CD14-positive monocyte (primary cell): ENCODE measurements at regions of chr6 and their contacts with region 1.

Region 1: GRCh38 chr6:5657684-5658430 is 348.9 kb downstream of the NRN1 start:
- DNase-seq: peak; percentile 81 to 93 (median 89)
- H3K4me3 ChIP-seq: peak overlapping the region in 1 of 3 experiments; percentile 21
- H3K4me3 Mint-ChIP-seq: peak overlapping the region; percentile 61 to 67
- H3K27ac ChIP-seq: peak overlapping the region; percentile 78 to 97
- H3K27ac Mint-ChIP-seq: peak overlapping the region; percentile 97 to 100 (median 99)
- H3K4me1 ChIP-seq: peaks cover 18 to 23% of the 10 kb centered on the region in 2 donors
- H3K4me1 Mint-ChIP-seq: peaks cover 20% of the 10 kb centered on the region
- H3K27me3 ChIP-seq: no peaks in the 10 kb centered on the region
- H3K27me3 Mint-ChIP-seq: peaks cover 0 to 2% (median 0%) of the 10 kb centered on the region in 3 donors
- CTCF ChIP-seq: no peak

Region 2: DNA sequence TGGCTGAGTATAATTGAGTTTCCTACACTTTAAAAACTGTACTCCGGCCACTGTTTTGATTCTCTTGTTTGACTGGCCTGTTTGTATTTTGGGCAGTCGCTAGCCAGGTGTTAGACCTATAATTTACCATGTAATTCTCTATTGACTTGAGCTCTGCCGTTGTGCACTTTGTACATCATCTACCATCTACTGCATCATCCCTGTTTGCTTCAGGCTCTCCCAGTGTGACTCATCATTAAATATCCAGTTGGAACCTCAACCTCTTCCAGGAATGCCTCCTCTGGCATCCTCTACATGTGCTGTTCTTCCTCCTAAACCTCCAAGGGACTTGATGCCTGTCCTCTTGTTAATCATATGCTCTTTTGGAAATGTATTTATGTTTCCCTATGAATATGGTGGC is 324.2 kb before region 1 on chr6:
- intact Hi-C with region 1: no loop called
- DNase-seq: no peak
- H3K4me3 ChIP-seq: no peak overlapping the region
- H3K4me3 Mint-ChIP-seq: no peak overlapping the region
- H3K27ac ChIP-seq: no peak overlapping the region
- H3K27ac Mint-ChIP-seq: no peak overlapping the region
- H3K4me1 ChIP-seq: peaks cover 0 to 11% of the 10 kb centered on the region in 2 donors
- H3K4me1 Mint-ChIP-seq: peaks cover 14% of the 10 kb centered on the region
- H3K27me3 ChIP-seq: no peaks in the 10 kb centered on the region
- H3K27me3 Mint-ChIP-seq: no peaks in the 10 kb centered on the region
- CTCF ChIP-seq: no peak

Region 3: DNA sequence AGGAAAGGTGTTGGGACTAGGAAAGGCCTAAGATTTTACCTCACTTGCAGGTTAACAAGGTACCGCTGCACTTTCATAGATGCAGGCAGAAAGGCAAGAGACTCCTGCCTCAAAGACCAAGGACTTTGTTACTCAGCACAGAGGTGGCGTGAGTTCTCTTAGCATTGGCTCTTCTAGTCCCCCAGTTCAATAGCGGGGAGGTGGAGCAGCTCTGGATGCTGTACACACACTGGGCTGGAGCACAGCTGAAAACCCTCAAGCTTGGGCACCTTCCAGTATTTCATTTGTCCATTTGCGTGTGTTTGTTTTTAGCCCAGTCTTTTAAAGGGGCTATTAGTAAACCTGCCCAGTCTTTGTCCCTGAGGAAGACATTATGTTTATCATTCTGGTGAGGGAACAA is 51.3 kb before region 1 on chr6:
- intact Hi-C with region 1: no loop called
- DNase-seq: no peak
- H3K4me3 ChIP-seq: no peak overlapping the region
- H3K4me3 Mint-ChIP-seq: no peak overlapping the region
- H3K27ac ChIP-seq: no peak overlapping the region
- H3K27ac Mint-ChIP-seq: no peak overlapping the region
- H3K4me1 ChIP-seq: no peaks in the 10 kb centered on the region
- H3K4me1 Mint-ChIP-seq: no peaks in the 10 kb centered on the region
- H3K27me3 ChIP-seq: no peaks in the 10 kb centered on the region
- H3K27me3 Mint-ChIP-seq: peaks cover 0 to 3% (median 0%) of the 10 kb centered on the region in 3 donors
- CTCF ChIP-seq: no peak

Region 4: DNA sequence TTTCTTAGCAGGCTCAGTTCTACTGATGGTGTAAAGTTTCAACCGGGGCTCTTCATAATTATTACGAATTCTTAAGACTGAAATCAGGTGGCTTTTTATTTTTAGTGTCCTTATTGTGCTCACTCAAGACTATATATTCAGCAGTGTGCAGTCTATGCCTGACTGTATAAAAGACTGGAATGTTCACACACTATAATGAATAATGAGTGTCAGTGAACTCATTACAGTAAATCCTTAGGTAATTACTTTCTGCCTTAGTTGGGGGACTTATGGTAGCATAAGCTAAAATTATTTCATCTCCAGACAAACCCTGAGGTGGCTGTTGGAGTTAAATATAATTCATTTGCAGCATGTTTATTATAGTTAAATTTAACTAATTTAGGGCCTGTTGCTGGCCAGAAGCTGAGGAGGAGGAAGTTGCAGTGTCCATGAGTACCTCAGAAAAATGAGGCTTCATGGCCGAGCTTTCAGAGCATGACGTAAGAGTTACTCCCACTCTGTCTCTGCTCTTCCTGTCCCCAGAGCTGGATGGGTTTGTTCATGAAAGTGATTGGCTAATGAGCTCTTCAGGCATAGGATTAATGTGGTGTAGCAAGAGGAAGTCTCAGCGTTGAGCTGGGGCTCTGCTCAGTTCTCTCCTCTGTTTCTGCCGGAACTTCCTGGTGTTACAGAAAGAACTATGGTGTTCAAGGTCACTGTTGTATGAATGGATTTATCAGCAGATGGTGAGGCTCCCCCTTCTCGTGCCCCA is 13.1 kb after region 1 on chr6:
- intact Hi-C with region 1: loop called in 1 of 2 experiments (anchors 2 kb)
- DNase-seq: peak; percentile 93 to 98 (median 97)
- H3K4me3 ChIP-seq: peak overlapping the region in 1 of 3 experiments; percentile 49
- H3K4me3 Mint-ChIP-seq: peak overlapping the region; percentile 7 to 68
- H3K27ac ChIP-seq: peak overlapping the region; percentile 92 to 93
- H3K27ac Mint-ChIP-seq: peak overlapping the region; percentile 94 to 98 (median 98)
- H3K4me1 ChIP-seq: peaks cover 48 to 56% of the 10 kb centered on the region in 2 donors
- H3K4me1 Mint-ChIP-seq: peaks cover 50% of the 10 kb centered on the region
- H3K27me3 ChIP-seq: no peaks in the 10 kb centered on the region
- H3K27me3 Mint-ChIP-seq: peaks cover 0 to 1% (median 0%) of the 10 kb centered on the region in 3 donors
- CTCF ChIP-seq: no peak

Region 5: GRCh38 chr6:5701174-5701573 is 43.3 kb after region 1 on chr6:
- intact Hi-C with region 1: loop called in 1 of 2 experiments (anchors 5 kb)
- DNase-seq: no peak
- H3K4me3 ChIP-seq: no peak overlapping the region
- H3K4me3 Mint-ChIP-seq: no peak overlapping the region
- H3K27ac ChIP-seq: no peak overlapping the region
- H3K27ac Mint-ChIP-seq: no peak overlapping the region
- H3K4me1 ChIP-seq: peaks cover 30 to 48% of the 10 kb centered on the region in 2 donors
- H3K4me1 Mint-ChIP-seq: peaks cover 44% of the 10 kb centered on the region
- H3K27me3 ChIP-seq: no peaks in the 10 kb centered on the region
- H3K27me3 Mint-ChIP-seq: peaks cover 0 to 2% (median 0%) of the 10 kb centered on the region in 3 donors
- CTCF ChIP-seq: no peak